AG04450 (cell line): ENCODE measurements at regions of chr1 and their contacts with region 1.

Region 1: GRCh38 chr1:14915356-14916054 is 238.0 kb upstream of the TMEM51 start:
- DNase-seq: no peak
- H3K4me3 ChIP-seq: no peak overlapping the region
- H3K27ac ChIP-seq: no peak overlapping the region
- H3K27me3 ChIP-seq: no peaks in the 10 kb centered on the region
- CTCF ChIP-seq: peak; percentile 95

Region 2: DNA sequence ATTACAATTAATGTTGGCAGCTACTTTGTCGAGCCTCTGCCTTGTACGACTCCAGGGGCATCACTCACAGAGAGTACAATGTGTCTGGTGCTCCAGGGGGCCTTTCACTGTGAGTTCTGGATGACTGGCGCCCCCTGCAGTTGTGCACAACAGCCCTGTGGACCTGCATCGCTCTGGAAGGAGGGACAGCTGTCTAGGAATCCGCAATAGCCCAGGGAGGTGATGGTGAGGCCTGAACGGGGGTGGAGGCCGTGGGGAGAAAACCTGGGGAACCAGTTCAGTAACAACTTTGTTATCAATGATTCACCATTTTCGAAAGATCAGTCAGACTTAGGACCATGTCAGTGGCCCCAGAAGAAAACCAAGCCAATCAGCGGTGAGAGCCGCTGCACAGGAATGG is 127.9 kb before region 1 on chr1:
- CTCF ChIA-PET with region 1: interaction called, 10 read pairs
- POLR2A ChIA-PET with region 1: no interaction called
- DNase-seq: no peak
- H3K4me3 ChIP-seq: no peak overlapping the region
- H3K27ac ChIP-seq: no peak overlapping the region
- H3K27me3 ChIP-seq: peaks cover 3% of the 10 kb centered on the region
- CTCF ChIP-seq: no peak

Region 3: DNA sequence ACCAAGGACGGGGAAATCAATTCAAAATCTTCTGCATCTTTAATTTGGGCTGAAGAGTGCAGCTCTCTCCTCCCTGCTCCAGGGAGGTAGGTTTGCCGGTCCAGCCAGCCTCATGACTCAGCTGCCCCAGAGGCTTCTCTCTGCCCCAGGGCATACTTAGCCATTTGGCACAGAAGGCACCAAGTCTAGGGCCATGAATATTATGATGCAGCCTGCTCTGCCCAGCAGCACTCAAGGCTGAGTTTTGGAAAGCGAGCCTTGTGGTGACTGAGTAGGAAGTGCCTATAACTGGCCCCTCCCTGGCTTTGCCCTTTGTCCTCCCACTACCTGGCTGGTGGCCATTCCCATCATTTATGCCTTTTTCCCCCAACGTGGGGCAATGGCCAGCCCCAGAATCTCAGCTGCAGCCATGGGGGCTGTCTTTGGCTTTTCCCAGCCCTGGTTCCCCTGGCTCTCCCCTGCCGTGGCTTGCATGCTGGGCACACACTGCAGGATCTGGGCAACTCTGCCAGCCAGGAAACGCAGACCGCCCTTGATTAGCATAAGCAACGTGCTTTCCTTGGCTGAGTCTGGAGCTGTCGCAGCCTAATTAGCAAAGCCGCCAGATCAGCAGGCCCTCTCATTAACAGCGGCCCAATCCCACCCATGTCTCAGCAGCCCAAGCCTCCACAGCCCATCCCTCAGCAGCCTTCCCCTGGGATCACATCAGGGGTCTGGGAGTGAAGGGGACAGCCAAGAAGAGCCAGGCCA is 20.5 kb before region 1 on chr1:
- CTCF ChIA-PET with region 1: interaction called, 17 read pairs
- POLR2A ChIA-PET with region 1: no interaction called
- DNase-seq: no peak
- H3K4me3 ChIP-seq: no peak overlapping the region
- H3K27ac ChIP-seq: no peak overlapping the region
- H3K27me3 ChIP-seq: peaks cover 9% of the 10 kb centered on the region
- CTCF ChIP-seq: no peak

Region 4: DNA sequence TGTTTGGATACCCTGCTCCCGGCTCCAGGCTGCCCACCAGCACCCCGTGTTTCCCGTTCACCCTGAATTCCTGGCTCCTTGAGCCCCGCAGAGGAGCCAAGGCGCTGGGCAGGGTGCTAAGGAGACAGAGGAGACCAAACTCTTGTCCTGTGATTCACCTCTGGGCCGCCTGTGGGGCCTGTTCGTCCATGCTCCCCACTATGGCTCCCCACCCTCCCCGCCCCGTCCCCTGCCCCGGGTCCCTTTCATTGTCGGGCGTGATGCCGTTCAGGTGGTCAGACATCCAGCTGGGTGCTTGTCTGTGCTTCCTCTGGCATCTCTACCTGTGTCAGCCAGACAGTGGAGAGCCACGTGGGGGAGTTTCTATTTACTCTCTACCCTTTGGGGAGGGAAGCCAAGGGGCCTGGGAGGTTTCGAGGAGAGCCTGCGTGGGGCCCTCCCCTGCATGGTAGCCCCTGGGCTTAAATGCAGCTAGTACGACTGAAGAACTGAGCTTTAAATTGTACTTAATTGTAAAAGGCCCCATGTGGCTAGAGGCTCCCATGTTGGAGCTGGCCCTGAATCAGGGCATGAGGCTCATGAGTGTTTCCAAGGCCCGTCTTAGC is 16.6 kb after region 1 on chr1:
- CTCF ChIA-PET with region 1: no interaction called
- POLR2A ChIA-PET with region 1: no interaction called
- DNase-seq: no peak
- H3K4me3 ChIP-seq: no peak overlapping the region
- H3K27ac ChIP-seq: no peak overlapping the region
- H3K27me3 ChIP-seq: no peaks in the 10 kb centered on the region
- CTCF ChIP-seq: no peak